ENCODE measurements at regions of chr4 and their contacts with region 1.

Region 1: GRCh38 chr4:3346146-3346545 is 53.3 kb downstream of the RGS12 start:
- DNase-seq: peak in 5 of 9 experiments; percentile 22 to 76 (median 45)
- ATAC-seq: peak; percentile 67
- H3K4me3 ChIP-seq: no peak overlapping the region
- H3K4me3 Mint-ChIP-seq: no peak overlapping the region
- H3K27ac ChIP-seq: no peak overlapping the region
- H3K27ac Mint-ChIP-seq: no peak overlapping the region
- H3K4me1 ChIP-seq: peaks cover 19% of the 10 kb centered on the region
- H3K4me1 Mint-ChIP-seq: peaks cover 27% of the 10 kb centered on the region
- H3K27me3 ChIP-seq: no peaks in the 10 kb centered on the region
- H3K27me3 Mint-ChIP-seq: peaks cover 6% of the 10 kb centered on the region
- CTCF ChIP-seq: peak; percentile 89

Region 2: GRCh38 chr4:3193531-3194203 is 152.5 kb before region 1 on chr4:
- CTCF ChIA-PET with region 1: interaction called, 14 read pairs
- POLR2A ChIA-PET with region 1: no interaction called
- intact Hi-C with region 1: loop called in 1 of 2 experiments (anchors 2 kb)
- DNase-seq: peak in 3 of 9 experiments; percentile 37 to 61 (median 38)
- ATAC-seq: peak; percentile 27
- H3K4me3 ChIP-seq: no peak overlapping the region
- H3K4me3 Mint-ChIP-seq: no peak overlapping the region
- H3K27ac ChIP-seq: peak overlapping the region in 1 of 2 experiments; percentile 91
- H3K27ac Mint-ChIP-seq: no peak overlapping the region
- H3K4me1 ChIP-seq: peaks cover 49% of the 10 kb centered on the region
- H3K4me1 Mint-ChIP-seq: peaks cover 68% of the 10 kb centered on the region
- H3K27me3 ChIP-seq: no peaks in the 10 kb centered on the region
- H3K27me3 Mint-ChIP-seq: no peaks in the 10 kb centered on the region
- CTCF ChIP-seq: peak; percentile 70

Region 3: DNA sequence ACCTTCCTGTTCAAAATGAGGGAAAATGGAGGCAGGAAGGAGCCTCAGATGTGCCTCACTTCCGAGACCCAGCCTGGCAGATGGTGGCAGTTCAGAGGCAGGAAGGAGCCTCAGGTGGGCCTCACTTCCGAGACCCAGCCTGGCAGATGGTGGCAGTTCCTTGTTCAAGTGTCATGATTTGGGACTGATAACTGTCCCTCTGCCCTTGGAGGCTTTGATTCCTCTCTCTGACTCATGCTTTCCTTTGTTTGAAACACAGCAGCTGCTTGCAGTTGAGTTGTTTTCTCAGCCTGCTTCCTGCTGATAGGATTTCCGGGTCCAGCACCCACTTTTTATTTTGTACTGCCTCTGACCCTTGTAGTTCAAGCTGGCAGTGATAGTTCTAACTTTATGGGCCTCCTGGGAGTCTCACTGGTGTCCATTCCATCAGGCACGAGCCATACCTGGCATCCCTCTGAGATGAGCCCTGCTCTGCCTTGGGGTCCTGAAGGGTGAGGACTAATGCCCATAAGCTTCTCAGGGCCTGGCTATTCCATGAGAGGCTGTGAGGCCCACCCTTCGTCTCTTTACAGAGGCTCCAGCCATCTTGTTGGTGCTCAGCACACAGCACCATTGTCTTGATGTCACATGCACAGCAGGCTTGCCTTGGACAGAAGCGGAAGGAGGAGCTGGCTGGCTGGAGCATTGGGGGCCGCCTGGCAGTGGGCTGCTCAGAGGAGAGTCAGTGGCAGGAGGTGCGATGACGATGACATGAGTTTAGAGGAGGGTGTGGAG is 40.4 kb before region 1 on chr4:
- CTCF ChIA-PET with region 1: interaction called, 3 read pairs
- POLR2A ChIA-PET with region 1: no interaction called
- intact Hi-C with region 1: loop called (anchors 1 kb)
- DNase-seq: peak in 2 of 9 experiments; percentile 38 to 45
- ATAC-seq: no peak
- H3K4me3 ChIP-seq: peak overlapping the region in 1 of 2 experiments; percentile 5
- H3K4me3 Mint-ChIP-seq: no peak overlapping the region
- H3K27ac ChIP-seq: no peak overlapping the region
- H3K27ac Mint-ChIP-seq: peak overlapping the region; percentile 64
- H3K4me1 ChIP-seq: peaks cover 48% of the 10 kb centered on the region
- H3K4me1 Mint-ChIP-seq: peaks cover 56% of the 10 kb centered on the region
- H3K27me3 ChIP-seq: peaks cover 0 to 2% of the 10 kb centered on the region in 2 experiments
- H3K27me3 Mint-ChIP-seq: peaks cover 17% of the 10 kb centered on the region
- CTCF ChIP-seq: no peak

Region 4: GRCh38 chr4:3442959-3443749 is 97.0 kb after region 1 on chr4:
- CTCF ChIA-PET with region 1: interaction called, 6 read pairs
- POLR2A ChIA-PET with region 1: no interaction called
- intact Hi-C with region 1: loop called in 1 of 2 experiments (anchors 1 kb)
- DNase-seq: peak; percentile 46 to 83 (median 64)
- ATAC-seq: peak; percentile 91
- H3K4me3 ChIP-seq: no peak overlapping the region
- H3K4me3 Mint-ChIP-seq: no peak overlapping the region
- H3K27ac ChIP-seq: no peak overlapping the region
- H3K27ac Mint-ChIP-seq: no peak overlapping the region
- H3K4me1 ChIP-seq: no peaks in the 10 kb centered on the region
- H3K4me1 Mint-ChIP-seq: no peaks in the 10 kb centered on the region
- H3K27me3 ChIP-seq: no peaks in the 10 kb centered on the region
- H3K27me3 Mint-ChIP-seq: no peaks in the 10 kb centered on the region
- CTCF ChIP-seq: peak; percentile 89

Region 5: GRCh38 chr4:3880615-3881120 is 534.5 kb after region 1 on chr4:
- CTCF ChIA-PET with region 1: interaction called, 4 read pairs
- POLR2A ChIA-PET with region 1: no interaction called
- intact Hi-C with region 1: loop called in 1 of 2 experiments (anchors 1 kb)
- DNase-seq: peak; percentile 45 to 83 (median 68)
- ATAC-seq: peak; percentile 78
- H3K4me3 ChIP-seq: peak overlapping the region; percentile 24 to 28
- H3K4me3 Mint-ChIP-seq: peak overlapping the region; percentile 56
- H3K27ac ChIP-seq: no peak overlapping the region
- H3K27ac Mint-ChIP-seq: no peak overlapping the region
- H3K4me1 ChIP-seq: peaks cover 15% of the 10 kb centered on the region
- H3K4me1 Mint-ChIP-seq: peaks cover 17% of the 10 kb centered on the region
- H3K27me3 ChIP-seq: no peaks in the 10 kb centered on the region
- H3K27me3 Mint-ChIP-seq: peaks cover 42% of the 10 kb centered on the region
- CTCF ChIP-seq: peak; percentile 59